Activated B cell treated with CpG ODN at 0.5 μM for 24 hours (primary cell): ENCODE measurements at regions of chr14 and their contacts with region 1.

Region 1: DNA sequence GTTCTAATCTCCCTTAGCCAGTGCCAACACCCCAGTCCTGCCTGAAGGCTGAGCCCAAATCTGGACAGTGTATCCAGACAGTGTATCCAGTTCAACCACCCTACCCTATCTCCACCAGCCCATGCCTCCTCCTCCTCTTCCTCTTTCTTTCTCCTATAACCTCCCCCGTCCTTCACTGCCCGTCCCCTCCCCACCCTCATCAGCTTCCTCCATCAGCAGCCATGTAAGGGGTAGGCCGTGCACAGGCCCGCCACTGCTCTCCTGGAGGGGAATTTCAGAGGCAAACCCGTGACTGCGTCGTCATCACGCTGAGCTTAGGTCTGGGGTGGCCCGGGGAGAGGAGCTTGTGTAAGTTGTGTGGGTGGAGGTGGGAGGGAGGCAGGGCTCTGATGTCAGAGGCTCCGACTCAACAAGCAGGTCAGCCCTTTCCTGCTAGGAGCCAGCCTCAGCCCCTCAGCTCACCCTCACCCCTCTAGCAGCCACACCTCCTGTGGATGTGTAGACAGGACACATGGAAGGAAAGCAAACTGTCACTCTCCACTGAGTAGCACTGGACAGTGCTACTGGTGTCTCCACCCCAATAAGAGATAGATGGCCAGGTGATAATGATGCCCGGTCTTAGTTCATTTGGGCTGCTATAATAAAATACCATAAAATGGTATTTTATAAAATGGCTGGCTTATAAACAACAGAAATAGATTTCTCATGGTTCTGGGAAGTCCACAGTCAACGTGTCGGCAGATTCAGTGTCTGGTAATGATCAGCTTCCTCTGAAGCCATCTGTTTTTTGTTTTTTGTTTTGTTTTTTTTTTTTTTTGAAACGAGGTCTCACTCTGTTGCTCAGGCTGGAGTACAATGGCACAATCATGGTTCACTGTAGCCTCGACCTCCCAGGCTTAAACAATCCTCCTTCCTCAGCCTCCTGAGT is 50.5 kb downstream of the IRF2BPL start:
- DNase-seq: peak; percentile 74
- ATAC-seq: peak; percentile 96
- H3K4me3 Mint-ChIP-seq: peak overlapping the region; percentile 63
- H3K27ac Mint-ChIP-seq: peak overlapping the region; percentile 88
- H3K4me1 Mint-ChIP-seq: peaks cover 31% of the 10 kb centered on the region
- H3K27me3 Mint-ChIP-seq: no peaks in the 10 kb centered on the region
- CTCF ChIP-seq: no peak

Region 2: DNA sequence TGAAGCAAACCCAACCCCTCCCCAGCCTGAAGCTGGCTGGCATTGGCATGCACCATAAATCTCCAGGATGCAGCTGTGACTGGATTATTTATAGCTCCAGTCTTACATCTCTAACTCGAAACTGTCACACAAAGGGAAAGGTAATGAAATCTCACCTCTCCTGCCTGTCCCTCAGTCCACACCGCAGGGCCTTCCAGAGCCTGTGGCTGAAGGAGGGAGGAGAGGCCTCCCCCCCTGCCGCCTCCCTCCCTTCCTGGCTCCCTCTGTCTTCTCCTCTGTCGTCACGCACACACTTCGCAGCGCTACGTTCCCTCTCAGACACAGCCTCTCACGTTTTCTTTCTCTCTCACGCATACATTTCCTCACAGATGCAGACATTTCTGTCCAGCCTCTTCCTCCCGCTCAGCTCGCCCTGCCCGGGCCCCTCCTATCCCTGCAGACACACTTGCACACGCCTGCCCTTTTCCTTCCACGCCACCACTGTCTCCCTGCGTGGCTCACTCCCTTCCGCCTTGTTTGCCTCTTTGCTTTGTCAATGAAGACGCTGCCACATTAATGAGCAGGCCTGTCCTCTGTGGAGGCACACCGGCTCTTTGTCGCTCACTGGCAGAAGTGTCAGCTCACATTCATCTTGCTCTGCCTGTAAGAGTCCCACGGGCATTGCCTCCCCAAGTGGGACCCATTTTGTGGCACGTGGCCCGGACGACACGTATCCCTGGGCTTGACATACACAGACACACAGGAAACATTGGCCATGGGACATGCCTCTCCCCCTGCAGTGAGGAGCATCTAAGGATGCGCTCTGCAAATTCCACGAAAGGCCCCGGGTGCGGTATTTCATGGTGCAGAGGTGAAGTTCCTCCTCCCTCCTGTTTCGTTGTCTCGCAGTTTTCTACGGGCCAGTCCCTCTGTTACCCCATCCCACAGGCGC is 22.5 kb after region 1 on chr14:
- CTCF ChIA-PET with region 1: no interaction called
- POLR2A ChIA-PET with region 1: interaction called, 10 read pairs
- intact Hi-C with region 1: loop called (anchors 2 kb)
- DNase-seq: no peak
- ATAC-seq: peak; percentile 72
- H3K4me3 Mint-ChIP-seq: peak overlapping the region; percentile 80
- H3K27ac Mint-ChIP-seq: peak overlapping the region; percentile 62
- H3K4me1 Mint-ChIP-seq: peaks cover 32% of the 10 kb centered on the region
- H3K27me3 Mint-ChIP-seq: no peaks in the 10 kb centered on the region
- CTCF ChIP-seq: no peak

Region 3: DNA sequence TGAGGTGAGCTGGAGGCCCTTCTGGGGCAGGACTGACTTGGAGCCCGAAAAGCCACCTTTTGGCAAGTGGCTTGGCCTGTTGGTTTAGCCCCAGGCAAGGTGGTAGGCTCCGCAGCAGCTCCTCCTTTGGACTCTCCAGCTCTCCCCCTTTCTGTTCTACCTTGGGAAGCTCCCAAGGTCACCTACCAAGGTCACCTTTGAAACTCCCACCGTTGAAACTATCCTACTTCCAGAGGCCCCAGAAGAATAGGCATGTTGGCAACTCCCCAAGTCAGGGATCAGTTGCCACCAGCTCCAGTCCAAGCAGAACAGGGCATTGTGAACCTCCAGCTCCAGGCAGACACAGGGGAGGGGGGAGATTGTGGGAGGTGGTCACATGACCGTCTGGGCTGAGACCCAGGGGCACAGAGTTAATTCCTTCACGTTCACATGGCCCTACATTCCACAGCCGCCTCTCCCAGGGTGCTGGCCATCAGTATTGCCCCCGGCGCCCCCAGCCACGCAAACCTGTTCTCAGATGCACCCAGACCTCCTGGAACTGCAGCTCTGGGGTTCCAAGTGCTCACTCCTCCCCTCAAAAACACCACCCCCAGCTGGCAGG is 36.0 kb after region 1 on chr14:
- CTCF ChIA-PET with region 1: no interaction called
- POLR2A ChIA-PET with region 1: no interaction called
- intact Hi-C with region 1: no loop called
- DNase-seq: no peak
- ATAC-seq: no peak
- H3K4me3 Mint-ChIP-seq: no peak overlapping the region
- H3K27ac Mint-ChIP-seq: no peak overlapping the region
- H3K4me1 Mint-ChIP-seq: no peaks in the 10 kb centered on the region
- H3K27me3 Mint-ChIP-seq: peaks cover 7% of the 10 kb centered on the region
- CTCF ChIP-seq: no peak

Region 4: DNA sequence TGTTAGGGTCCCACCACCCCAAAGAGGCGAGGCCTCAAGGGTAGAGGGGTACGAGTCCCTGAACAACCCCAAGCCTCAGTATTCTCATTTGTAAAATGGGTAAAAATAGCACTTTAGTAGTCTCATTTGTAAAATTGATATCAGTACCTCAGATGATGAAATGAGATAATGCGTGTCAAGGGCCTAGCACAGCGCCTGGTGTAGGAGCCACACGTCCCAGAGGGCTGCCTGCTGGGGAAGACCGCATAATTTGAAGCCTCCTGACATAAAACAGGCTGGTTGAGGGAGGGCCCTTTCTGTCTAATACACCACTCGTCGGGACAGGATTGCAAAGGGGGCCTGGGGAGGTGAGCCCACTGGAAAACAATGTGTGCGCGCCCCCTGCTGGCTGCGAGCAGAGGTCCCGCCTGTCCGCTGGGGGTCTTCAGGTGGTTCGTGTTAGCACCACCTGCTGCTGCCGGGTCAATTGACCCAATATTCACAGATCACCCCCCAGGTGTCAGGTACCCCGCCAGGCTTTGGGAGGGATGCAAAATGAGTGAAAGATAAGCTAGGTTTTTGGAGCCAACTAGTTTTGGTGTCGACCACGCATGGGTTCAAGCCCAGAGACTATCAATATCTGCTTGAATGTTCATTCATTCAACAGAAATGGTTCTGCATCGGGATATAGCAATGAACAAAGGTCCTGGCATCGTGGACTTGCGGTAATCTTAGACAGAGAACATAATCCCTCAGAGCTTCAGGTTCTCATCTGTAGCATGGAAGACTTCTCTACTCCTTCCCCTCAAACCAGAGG is 75.2 kb after region 1 on chr14:
- CTCF ChIA-PET with region 1: no interaction called
- POLR2A ChIA-PET with region 1: no interaction called
- intact Hi-C with region 1: loop called (anchors 1 kb)
- DNase-seq: peak; percentile 79
- ATAC-seq: peak; percentile 90
- H3K4me3 Mint-ChIP-seq: no peak overlapping the region
- H3K27ac Mint-ChIP-seq: peak overlapping the region; percentile 24
- H3K4me1 Mint-ChIP-seq: peaks cover 8% of the 10 kb centered on the region
- H3K27me3 Mint-ChIP-seq: no peaks in the 10 kb centered on the region
- CTCF ChIP-seq: peak; percentile 74

Region 5: GRCh38 chr14:77353469-77354141 is 375.5 kb after region 1 on chr14:
- CTCF ChIA-PET with region 1: no interaction called
- POLR2A ChIA-PET with region 1: no interaction called
- intact Hi-C with region 1: no loop called
- DNase-seq: no peak
- ATAC-seq: no peak
- H3K4me3 Mint-ChIP-seq: no peak overlapping the region
- H3K27ac Mint-ChIP-seq: peak overlapping the region; percentile 20
- H3K4me1 Mint-ChIP-seq: peaks cover 23% of the 10 kb centered on the region
- H3K27me3 Mint-ChIP-seq: no peaks in the 10 kb centered on the region
- CTCF ChIP-seq: no peak